Mammary epithelial cell (primary cell): ENCODE measurements at regions of chr5 and their contacts with region 1.

Region 1: GRCh38 chr5:84372066-84372695 is 12.5 kb downstream of the EDIL3 start:
- DNase-seq: no peak
- H3K4me3 ChIP-seq: no peak overlapping the region
- H3K27ac ChIP-seq: no peak overlapping the region
- H3K4me1 ChIP-seq: peaks cover 4% of the 10 kb centered on the region
- H3K27me3 ChIP-seq: peaks cover 3% of the 10 kb centered on the region
- CTCF ChIP-seq: no peak

Region 2: GRCh38 chr5:83947763-83948162 is 424.4 kb before region 1 on chr5:
- CTCF ChIA-PET with region 1: no interaction called
- dilution Hi-C with region 1: no loop called
- in situ Hi-C with region 1: no loop called
- intact Hi-C with region 1: no loop called
- DNase-seq: no peak
- H3K4me3 ChIP-seq: no peak overlapping the region
- H3K27ac ChIP-seq: no peak overlapping the region
- H3K4me1 ChIP-seq: no peaks in the 10 kb centered on the region
- H3K27me3 ChIP-seq: peaks cover 4% of the 10 kb centered on the region
- CTCF ChIP-seq: no peak

Region 3: GRCh38 chr5:84287951-84288350 is 84.2 kb before region 1 on chr5:
- CTCF ChIA-PET with region 1: no interaction called
- dilution Hi-C with region 1: no loop called
- in situ Hi-C with region 1: no loop called
- intact Hi-C with region 1: loop called (anchors 2 kb)
- DNase-seq: peak; percentile 92
- H3K4me3 ChIP-seq: no peak overlapping the region
- H3K27ac ChIP-seq: no peak overlapping the region
- H3K4me1 ChIP-seq: peaks cover 12% of the 10 kb centered on the region
- H3K27me3 ChIP-seq: peaks cover 8% of the 10 kb centered on the region
- CTCF ChIP-seq: no peak

Region 4: DNA sequence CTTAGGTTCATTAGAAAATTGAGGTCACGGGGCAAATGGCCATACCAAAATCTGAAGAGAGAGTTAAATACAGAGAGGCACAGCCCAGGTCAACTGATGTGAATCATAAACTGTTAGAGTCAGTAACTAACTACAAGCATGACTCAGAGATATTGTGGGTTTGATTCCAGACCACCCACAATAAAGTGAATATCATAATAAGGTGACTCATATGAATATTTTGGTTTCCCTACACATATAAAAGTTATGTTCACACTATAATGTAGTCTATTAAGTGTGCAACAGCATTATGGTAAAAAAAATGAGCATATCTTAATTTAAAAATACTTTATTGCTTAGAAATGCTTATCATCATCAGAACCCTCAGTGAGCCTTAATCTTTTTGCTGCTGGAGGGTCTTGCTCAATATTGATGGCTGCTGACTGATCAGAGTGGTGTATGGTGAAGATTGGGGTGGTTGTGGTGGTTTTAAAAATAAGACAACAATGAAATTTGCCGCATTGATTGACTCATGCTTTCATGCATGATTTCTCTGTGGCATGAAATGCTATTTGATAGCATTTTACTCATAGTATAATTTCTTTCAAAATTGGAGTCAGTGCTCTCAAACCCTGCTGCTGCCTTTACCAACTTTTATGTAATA is 65.6 kb after region 1 on chr5:
- CTCF ChIA-PET with region 1: no interaction called
- dilution Hi-C with region 1: no loop called
- in situ Hi-C with region 1: no loop called
- intact Hi-C with region 1: no loop called
- DNase-seq: peak; percentile 81
- H3K4me3 ChIP-seq: no peak overlapping the region
- H3K27ac ChIP-seq: no peak overlapping the region
- H3K4me1 ChIP-seq: peaks cover 15% of the 10 kb centered on the region
- H3K27me3 ChIP-seq: peaks cover 10% of the 10 kb centered on the region
- CTCF ChIP-seq: no peak

Region 5: DNA sequence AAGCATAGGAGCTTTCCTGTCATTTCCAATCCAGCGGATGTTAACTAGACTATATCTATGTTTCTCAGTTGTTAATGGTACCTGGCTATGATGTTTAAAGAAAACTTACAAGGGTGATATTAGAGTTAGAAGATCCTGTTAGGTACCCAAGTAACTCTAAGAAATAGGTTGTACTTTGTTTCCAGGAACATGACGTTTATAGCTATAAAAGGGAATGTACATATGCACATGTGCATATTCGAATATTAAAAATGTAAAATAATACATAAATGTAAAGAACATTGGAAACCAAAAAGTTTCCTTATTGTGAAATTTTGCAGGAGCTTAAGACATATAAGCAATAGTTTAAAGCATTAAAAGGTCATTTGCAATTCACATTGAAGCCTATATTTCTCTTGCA is 260.2 kb after region 1 on chr5:
- CTCF ChIA-PET with region 1: no interaction called
- dilution Hi-C with region 1: no loop called
- in situ Hi-C with region 1: no loop called
- intact Hi-C with region 1: no loop called
- DNase-seq: no peak
- H3K4me3 ChIP-seq: no peak overlapping the region
- H3K27ac ChIP-seq: no peak overlapping the region
- H3K4me1 ChIP-seq: no peaks in the 10 kb centered on the region
- H3K27me3 ChIP-seq: no peaks in the 10 kb centered on the region
- CTCF ChIP-seq: no peak